Activated CD4-positive, alpha-beta memory T cell treated with anti-CD3 and anti-CD28 coated beads for 36 hours (primary cell): ENCODE measurements at regions of chr6 and their contacts with region 1.

Region 1: DNA sequence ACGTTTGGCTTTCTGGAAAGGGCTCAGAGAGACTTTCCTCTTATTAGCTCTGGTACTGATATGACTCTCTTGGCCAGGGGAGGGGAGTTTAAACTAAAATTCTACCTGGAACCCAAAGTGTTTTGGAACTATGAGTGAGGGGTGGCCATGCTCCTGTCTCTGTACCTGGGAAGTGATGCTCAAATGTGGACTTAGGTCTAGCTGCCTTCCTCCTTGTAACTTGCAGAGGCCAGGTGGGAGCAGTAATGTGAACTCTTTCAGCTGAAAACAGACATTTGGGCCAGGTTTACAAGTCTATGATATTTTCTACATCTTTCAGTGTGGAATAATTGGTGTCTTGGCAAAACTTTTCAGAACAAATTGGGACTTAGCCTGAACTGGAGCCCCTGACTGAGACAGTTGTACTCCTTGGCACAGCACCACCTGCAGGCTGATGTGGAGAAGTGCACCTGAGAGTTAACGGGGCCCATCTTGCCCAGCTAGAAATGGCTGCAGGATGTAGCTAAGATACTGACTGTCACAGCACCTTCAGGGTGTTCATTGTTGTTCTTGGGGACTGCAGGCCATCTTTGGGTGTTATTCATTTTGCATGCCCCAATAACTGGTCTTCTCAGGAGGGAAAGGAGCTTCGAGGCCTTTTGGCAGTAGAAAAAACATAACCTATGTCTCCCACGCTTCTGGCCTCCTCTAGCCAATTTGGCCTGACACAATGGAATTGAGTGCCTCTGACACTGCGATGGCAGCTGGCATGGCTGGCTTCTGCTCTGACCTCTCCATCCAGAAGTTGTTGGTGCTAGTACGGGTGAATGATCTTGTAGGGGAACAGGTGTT is 37.1 kb downstream of the CD109 start:
- DNase-seq: peak; percentile 81
- H3K4me3 Mint-ChIP-seq: no peak overlapping the region
- H3K27ac Mint-ChIP-seq: no peak overlapping the region
- H3K4me1 Mint-ChIP-seq: peaks cover 10% of the 10 kb centered on the region
- H3K27me3 Mint-ChIP-seq: no peaks in the 10 kb centered on the region

Region 2: DNA sequence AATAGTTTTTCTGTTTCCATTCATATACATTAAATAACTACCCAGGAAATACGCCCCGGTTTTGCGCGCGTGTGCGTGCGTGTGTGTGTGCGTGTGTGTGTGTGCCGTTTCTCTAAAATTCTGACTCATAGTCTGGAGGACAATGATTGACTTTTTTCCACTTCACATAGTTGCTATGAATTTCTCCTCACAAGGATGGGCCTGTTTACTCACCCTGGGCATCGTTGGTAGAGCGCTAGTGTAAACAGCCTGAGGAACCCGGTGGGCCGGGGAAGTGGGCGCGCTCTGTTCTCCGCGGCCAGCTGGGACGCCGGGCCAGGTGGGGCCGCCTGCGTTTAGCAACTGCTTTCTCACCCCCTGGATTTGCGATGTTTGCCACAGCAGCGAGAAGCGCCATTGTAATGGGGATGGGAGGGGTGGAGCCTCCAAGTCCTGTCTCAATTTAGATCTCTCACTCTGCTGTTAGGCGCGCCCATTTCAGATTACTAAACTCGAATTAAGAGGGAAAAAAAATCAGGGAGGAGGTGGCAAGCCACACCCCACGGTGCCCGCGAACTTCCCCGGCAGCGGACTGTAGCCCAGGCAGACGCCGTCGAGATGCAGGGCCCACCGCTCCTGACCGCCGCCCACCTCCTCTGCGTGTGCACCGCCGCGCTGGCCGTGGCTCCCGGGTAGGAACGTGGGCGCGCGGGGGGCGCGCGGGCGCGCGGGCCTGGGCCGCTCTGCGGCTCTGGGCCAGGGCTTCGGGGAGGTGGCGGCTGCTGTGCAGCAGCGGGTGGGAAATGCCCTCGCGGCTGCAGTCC is 37.2 kb before region 1 on chr6 and contains the start of gene CD109:
- CTCF ChIA-PET with region 1: interaction called, 30 read pairs
- POLR2A ChIA-PET with region 1: no interaction called
- intact Hi-C with region 1: loop called (anchors 1 kb)
- DNase-seq: peak; percentile 87
- H3K4me3 Mint-ChIP-seq: peak within 1 kb of the TSS; percentile 80
- H3K27ac Mint-ChIP-seq: peak within 1 kb of the TSS; percentile 90
- H3K4me1 Mint-ChIP-seq: peaks cover 36% of the 10 kb centered on the region
- H3K27me3 Mint-ChIP-seq: peaks cover 16% of the 10 kb centered on the region
- total RNA-seq, gene CD109: 7.2 to 9.1 TPM

Region 3: DNA sequence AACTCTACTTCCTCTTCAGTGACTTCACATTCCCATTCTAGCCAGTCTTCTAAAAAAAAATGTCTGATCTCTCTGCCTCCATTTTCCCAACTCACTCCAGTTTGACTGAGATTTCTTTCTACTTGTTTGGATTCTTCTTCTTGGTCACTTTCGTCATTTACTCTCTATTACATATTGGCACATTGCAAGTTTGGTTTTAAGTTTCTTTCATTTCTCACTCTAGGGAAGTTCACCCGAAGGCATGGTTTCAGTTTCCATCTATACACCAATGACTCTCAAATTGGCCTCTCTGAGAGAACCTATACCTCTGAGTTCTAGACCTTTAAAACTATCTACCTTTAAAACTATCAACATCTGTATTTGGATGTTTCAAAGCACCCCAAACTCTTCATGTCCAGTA is 14.2 kb after region 1 on chr6:
- CTCF ChIA-PET with region 1: interaction called, 23 read pairs
- POLR2A ChIA-PET with region 1: no interaction called
- intact Hi-C with region 1: no loop called
- DNase-seq: no peak
- H3K4me3 Mint-ChIP-seq: no peak overlapping the region
- H3K27ac Mint-ChIP-seq: no peak overlapping the region
- H3K4me1 Mint-ChIP-seq: no peaks in the 10 kb centered on the region
- H3K27me3 Mint-ChIP-seq: no peaks in the 10 kb centered on the region

Region 4: DNA sequence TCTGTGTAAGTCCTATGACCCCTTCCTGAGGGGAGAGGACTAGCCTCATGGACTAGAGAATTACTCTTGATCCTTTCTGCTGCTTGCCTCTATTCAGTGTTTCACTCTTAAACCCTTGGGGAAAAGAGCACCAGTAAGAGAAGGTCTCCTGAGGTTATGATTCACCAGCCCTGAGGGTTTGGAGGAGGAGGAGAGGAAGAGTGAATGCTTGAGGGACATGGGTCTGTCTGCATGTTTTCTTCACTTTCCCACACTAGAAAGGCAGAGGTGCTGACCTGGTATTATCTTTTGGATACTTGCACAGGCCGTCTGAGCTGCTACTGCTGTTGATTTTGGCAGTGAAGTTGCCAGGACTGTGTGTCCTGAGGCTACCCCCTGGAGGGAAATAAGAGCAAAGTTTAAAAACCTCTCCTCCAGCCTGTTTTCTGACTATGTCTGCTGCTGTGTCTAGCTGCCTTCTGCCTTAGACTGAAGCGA is 41.3 kb after region 1 on chr6:
- CTCF ChIA-PET with region 1: no interaction called
- POLR2A ChIA-PET with region 1: no interaction called
- intact Hi-C with region 1: no loop called
- DNase-seq: no peak
- H3K4me3 Mint-ChIP-seq: no peak overlapping the region
- H3K27ac Mint-ChIP-seq: no peak overlapping the region
- H3K4me1 Mint-ChIP-seq: no peaks in the 10 kb centered on the region
- H3K27me3 Mint-ChIP-seq: no peaks in the 10 kb centered on the region